RWPE1 (cell line): ENCODE measurements at regions of chr1 and their contacts with region 1.

Region 1: GRCh38 chr1:241485554-241485992 is 34.0 kb downstream of the FH start:
- DNase-seq: peak; percentile 19
- H3K27ac ChIP-seq: no peak overlapping the region
- CTCF ChIP-seq: no peak; the same call in 1 of the 2 replicates

Region 2: DNA sequence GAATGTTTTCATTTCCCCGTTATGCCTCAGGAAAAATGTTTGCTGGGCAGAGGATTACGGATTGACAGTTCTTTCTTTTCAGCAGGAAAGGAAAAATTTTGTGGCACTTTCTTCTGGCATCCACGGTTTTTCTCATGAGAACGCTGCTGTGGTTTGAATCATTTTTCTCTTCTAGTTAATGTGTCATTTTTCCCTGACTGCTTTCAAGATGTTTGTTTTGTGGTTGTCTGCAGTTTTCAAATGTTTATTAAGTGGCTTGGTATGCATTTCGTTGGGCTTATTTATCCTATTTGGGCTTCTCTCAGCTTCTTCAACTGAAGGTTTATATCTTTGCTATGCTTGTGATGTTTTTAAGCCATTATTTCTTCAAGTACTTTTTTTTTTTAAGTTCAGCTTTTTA is 487.5 kb before region 1 on chr1:
- CTCF ChIA-PET with region 1: interaction called, 15 read pairs
- POLR2A ChIA-PET with region 1: no interaction called
- DNase-seq: no peak
- H3K27ac ChIP-seq: no peak overlapping the region
- CTCF ChIP-seq: no peak